IMR-90 (cell line): ENCODE measurements at regions of chr3 and their contacts with region 1.

Region 1: DNA sequence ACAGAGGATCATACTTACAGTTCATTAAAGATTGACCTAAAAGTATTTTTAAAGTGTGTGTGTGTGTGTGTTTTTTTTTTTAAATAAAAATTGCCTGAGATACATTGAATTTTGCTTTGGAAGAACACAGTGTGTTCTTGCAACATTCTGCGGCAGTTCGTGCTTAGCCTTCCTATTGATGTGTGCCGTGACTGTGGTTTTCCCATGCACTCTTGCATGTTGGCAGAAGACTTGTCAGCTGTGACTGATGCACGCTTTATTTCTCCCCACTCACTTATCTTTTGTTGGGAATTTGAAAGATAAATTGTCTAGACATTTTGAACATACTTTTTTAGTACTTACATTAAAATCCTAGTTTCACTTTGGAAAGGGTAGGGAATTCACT is 136.3 kb upstream of the LRRFIP2 start:
- DNase-seq: peak; percentile 68
- ATAC-seq: no peak; the same call in 1 of the 2 replicates
- H3K4me3 ChIP-seq: no peak overlapping the region
- H3K27ac ChIP-seq: no peak overlapping the region
- H3K4me1 ChIP-seq: peaks cover 4% of the 10 kb centered on the region; the same call in 1 of the 2 replicates
- H3K27me3 ChIP-seq: no peaks in the 10 kb centered on the region
- CTCF ChIP-seq: no peak
- POLR2A ChIP-seq: no peak
- RAD21 ChIP-seq: no peak

Region 2: DNA sequence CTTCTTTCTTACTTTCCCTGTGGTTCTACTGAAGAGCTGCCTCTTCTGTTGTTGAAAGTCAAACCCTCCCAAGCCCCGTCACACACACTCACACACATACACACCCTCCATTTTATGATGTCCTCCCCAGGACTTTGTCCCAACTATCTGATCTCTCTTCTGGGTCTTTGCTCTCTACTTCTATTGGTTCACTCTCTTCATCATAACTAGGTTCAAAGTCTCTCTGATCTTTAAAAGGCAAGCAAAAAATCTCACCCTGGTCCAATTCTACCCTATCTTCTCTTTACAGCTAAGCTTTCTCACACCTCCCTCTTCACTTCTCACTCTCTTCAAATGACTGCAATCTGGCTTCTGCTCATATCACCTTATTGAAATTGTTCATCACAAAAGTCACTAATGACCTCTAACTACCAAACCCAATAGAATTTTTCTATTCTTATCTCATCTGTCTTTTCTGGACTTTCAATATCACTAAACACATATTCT is 171.0 kb before region 1 on chr3:
- CTCF ChIA-PET with region 1: no interaction called
- POLR2A ChIA-PET with region 1: no interaction called
- dilution Hi-C with region 1: no loop called
- in situ Hi-C with region 1: no loop called
- intact Hi-C with region 1: no loop called
- DNase-seq: no peak
- ATAC-seq: no peak
- H3K4me3 ChIP-seq: no peak overlapping the region
- H3K27ac ChIP-seq: no peak overlapping the region
- H3K4me1 ChIP-seq: peaks cover 6% of the 10 kb centered on the region
- H3K27me3 ChIP-seq: no peaks in the 10 kb centered on the region
- CTCF ChIP-seq: no peak
- POLR2A ChIP-seq: no peak
- RAD21 ChIP-seq: no peak

Region 3: DNA sequence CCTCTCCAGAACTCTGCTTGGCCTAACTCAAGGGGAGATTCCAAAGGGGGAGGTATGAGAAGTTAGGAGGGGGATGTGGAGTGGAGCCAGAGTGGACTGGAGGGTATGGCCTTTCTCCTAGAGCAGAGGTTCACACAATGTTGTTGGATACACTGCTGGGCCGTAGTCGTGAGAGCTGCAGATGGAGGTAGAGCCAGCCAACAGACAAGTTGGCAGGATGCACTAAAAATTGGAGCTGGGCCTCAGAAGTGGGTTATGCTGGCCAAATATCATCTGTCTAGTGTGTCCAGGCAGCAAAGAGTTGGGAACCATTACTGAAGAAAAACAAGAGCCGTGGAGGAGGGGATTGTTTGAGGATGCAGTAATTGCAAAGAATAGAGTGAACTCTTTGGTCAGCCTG is 108.6 kb before region 1 on chr3:
- CTCF ChIA-PET with region 1: no interaction called
- POLR2A ChIA-PET with region 1: no interaction called
- dilution Hi-C with region 1: no loop called
- in situ Hi-C with region 1: no loop called
- intact Hi-C with region 1: no loop called
- DNase-seq: no peak
- ATAC-seq: no peak
- H3K4me3 ChIP-seq: no peak overlapping the region
- H3K27ac ChIP-seq: no peak overlapping the region
- H3K4me1 ChIP-seq: peaks cover 10% of the 10 kb centered on the region; the same call in 1 of the 2 replicates
- H3K27me3 ChIP-seq: no peaks in the 10 kb centered on the region
- CTCF ChIP-seq: no peak
- POLR2A ChIP-seq: no peak
- RAD21 ChIP-seq: no peak

Region 4: GRCh38 chr3:37262888-37263287 is 47.8 kb before region 1 on chr3:
- CTCF ChIA-PET with region 1: no interaction called
- POLR2A ChIA-PET with region 1: no interaction called
- dilution Hi-C with region 1: no loop called
- in situ Hi-C with region 1: no loop called
- intact Hi-C with region 1: no loop called
- DNase-seq: peak; percentile 45
- ATAC-seq: no peak
- H3K4me3 ChIP-seq: no peak overlapping the region
- H3K27ac ChIP-seq: no peak overlapping the region
- H3K4me1 ChIP-seq: no peaks in the 10 kb centered on the region; the same call in 1 of the 2 replicates
- H3K27me3 ChIP-seq: no peaks in the 10 kb centered on the region
- CTCF ChIP-seq: no peak
- POLR2A ChIP-seq: no peak
- RAD21 ChIP-seq: no peak

Region 5: GRCh38 chr3:37814547-37814946 is 503.9 kb after region 1 on chr3:
- CTCF ChIA-PET with region 1: interaction called, 4 read pairs
- POLR2A ChIA-PET with region 1: no interaction called
- dilution Hi-C with region 1: no loop called
- in situ Hi-C with region 1: no loop called
- intact Hi-C with region 1: loop called (anchors 10 kb)
- DNase-seq: peak; percentile 31
- ATAC-seq: peak; percentile 45
- H3K4me3 ChIP-seq: no peak overlapping the region
- H3K27ac ChIP-seq: no peak overlapping the region
- H3K4me1 ChIP-seq: peaks cover 22% of the 10 kb centered on the region
- H3K27me3 ChIP-seq: no peaks in the 10 kb centered on the region
- CTCF ChIP-seq: peak; percentile 51
- POLR2A ChIP-seq: no peak
- RAD21 ChIP-seq: peak; percentile 46